Mammary epithelial cell (primary cell): ENCODE measurements at regions of chr9 and their contacts with region 1.

Region 1: GRCh38 chr9:86948074-86948929 is 996 bp upstream of the GAS1 start:
- DNase-seq: peak; percentile 77
- H3K4me3 ChIP-seq: peak overlapping the region; percentile 44 to 93 (median 85)
- H3K27ac ChIP-seq: peak overlapping the region; percentile 45
- H3K4me1 ChIP-seq: peaks cover 9% of the 10 kb centered on the region
- H3K27me3 ChIP-seq: no peaks in the 10 kb centered on the region
- CTCF ChIP-seq: peak; percentile 86 to 95

Region 2: GRCh38 chr9:86434039-86434726 is 514.1 kb before region 1 on chr9:
- CTCF ChIA-PET with region 1: interaction called, 34 read pairs
- dilution Hi-C with region 1: no loop called
- in situ Hi-C with region 1: no loop called
- intact Hi-C with region 1: loop called (anchors 1 kb)
- DNase-seq: peak; percentile 35
- H3K4me3 ChIP-seq: no peak overlapping the region
- H3K27ac ChIP-seq: no peak overlapping the region
- H3K4me1 ChIP-seq: peaks cover 8% of the 10 kb centered on the region
- H3K27me3 ChIP-seq: no peaks in the 10 kb centered on the region
- CTCF ChIP-seq: peak; percentile 82 to 84

Region 3: DNA sequence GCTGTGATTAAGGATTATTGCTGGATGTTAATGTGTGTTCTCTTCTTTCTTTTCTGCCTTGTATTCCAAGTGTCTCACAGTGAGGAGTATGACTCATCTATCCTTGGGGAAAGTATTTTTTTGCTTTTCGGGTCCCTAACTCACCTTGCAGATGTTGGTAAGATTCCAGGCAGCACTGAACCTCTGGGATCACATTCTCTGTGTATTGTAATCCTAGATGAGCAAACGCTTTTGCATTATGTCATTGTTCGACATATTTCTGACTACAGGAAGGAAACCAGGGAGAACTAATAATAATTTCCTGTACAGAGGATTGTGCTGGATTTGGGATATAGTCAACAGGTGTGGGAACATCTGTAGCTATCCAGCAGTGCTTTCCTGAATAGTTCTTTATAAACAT is 348.0 kb before region 1 on chr9:
- CTCF ChIA-PET with region 1: no interaction called
- dilution Hi-C with region 1: no loop called
- in situ Hi-C with region 1: no loop called
- intact Hi-C with region 1: no loop called
- DNase-seq: peak; percentile 68
- H3K4me3 ChIP-seq: no peak overlapping the region
- H3K27ac ChIP-seq: no peak overlapping the region
- H3K4me1 ChIP-seq: peaks cover 12% of the 10 kb centered on the region
- H3K27me3 ChIP-seq: peaks cover 2% of the 10 kb centered on the region
- CTCF ChIP-seq: no peak

Region 4: DNA sequence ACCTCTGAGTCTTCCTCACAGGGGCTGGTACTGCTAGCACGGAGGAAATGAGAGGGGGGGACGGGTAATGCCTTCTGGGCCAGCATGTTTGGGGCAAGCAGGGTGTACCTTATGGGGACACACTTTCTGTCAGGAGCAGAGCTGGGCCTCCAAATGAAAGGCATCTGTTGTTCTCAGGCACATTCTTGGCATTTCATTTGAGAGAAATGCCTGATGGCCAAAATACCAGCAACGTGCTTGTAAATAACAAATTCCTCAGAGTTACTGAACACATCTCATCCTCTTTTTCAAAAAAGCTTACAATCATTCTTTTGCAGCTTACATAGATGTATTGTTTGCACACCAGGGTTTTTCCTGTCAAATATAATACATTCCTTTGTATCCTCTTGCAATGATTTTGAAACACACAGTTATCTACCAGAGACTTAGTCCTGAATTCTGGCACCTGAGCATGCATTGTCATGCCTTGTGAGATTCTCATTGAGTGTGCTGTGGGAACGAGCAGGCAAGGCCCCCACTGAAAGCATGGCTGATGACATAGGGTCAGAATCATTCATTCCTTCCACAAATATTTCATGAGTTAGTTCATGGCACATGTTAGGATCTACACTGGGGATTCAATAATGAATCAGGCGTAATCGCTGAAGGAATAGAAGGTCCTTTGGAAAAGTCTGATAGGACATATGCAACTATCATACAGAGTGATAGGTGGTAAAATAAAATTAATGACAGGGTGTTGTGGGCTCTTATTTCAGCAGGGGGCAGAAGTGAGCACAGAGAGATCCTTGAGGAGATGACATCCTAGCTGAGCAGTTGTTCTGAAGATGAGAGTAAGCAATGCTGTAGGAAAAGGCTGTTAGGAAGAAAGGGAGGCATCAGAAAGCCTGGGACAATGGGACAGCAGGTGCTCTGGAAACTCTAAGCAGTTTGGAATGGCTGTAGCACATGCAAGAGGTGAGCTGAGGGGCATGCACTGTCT is 333.1 kb before region 1 on chr9:
- CTCF ChIA-PET with region 1: no interaction called
- dilution Hi-C with region 1: no loop called
- in situ Hi-C with region 1: no loop called
- intact Hi-C with region 1: loop called (anchors 1 kb)
- DNase-seq: peak; percentile 35
- H3K4me3 ChIP-seq: no peak overlapping the region
- H3K27ac ChIP-seq: no peak overlapping the region
- H3K4me1 ChIP-seq: no peaks in the 10 kb centered on the region
- H3K27me3 ChIP-seq: no peaks in the 10 kb centered on the region
- CTCF ChIP-seq: peak; percentile 56 to 62

Region 5: DNA sequence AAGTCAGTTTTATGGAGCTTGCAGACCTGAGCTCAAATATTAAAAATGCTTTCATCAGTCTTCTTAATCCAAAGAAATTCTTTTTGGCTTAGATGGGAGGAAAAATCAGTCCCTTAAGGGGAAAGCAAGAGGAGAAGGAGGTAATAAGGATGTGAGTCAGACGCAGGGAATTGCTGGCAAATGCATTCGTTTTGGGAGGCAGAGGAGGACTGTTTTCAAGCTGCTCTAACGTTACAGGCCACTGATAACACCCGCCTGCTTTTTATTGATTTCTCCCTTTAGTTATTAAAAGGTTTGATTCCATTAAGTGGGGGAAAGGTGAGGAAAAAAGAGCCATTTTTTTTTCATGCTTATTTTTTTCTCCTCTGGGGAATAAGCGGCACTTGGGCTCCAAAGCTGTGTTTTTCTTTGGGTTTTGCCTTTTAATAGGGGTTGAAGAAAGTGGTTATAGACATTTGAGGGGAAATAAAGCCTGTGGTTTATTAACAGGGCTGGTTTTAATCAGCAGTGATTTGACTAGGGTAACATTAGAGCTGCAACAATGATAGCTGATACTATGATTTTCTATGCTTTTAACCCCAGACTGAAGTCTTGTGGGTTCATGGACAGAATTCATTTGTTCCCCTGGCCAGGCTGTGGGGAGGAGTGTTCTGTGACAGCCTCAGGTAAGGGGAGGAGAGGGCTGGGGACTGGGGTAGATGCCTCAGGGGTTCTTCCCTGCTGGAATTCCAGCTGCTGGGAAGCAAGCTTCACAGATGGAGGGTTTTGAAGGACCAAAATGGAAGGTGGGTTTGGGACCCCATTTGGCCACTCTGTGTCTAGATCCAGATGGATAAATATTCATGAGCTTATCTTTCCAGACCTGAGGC is 226.2 kb before region 1 on chr9:
- CTCF ChIA-PET with region 1: no interaction called
- dilution Hi-C with region 1: no loop called
- in situ Hi-C with region 1: no loop called
- intact Hi-C with region 1: no loop called
- DNase-seq: peak; percentile 72
- H3K4me3 ChIP-seq: peak overlapping the region in 1 of 3 experiments; percentile 5
- H3K27ac ChIP-seq: peak overlapping the region; percentile 55
- H3K4me1 ChIP-seq: peaks cover 31% of the 10 kb centered on the region
- H3K27me3 ChIP-seq: no peaks in the 10 kb centered on the region
- CTCF ChIP-seq: no peak

Region 6: GRCh38 chr9:86854898-86855523 is 93.3 kb before region 1 on chr9:
- CTCF ChIA-PET with region 1: no interaction called
- dilution Hi-C with region 1: no loop called
- in situ Hi-C with region 1: no loop called
- intact Hi-C with region 1: loop called (anchors 5 kb)
- DNase-seq: peak; percentile 68
- H3K4me3 ChIP-seq: no peak overlapping the region
- H3K27ac ChIP-seq: no peak overlapping the region
- H3K4me1 ChIP-seq: peaks cover 15% of the 10 kb centered on the region
- H3K27me3 ChIP-seq: no peaks in the 10 kb centered on the region
- CTCF ChIP-seq: no peak

Region 7: DNA sequence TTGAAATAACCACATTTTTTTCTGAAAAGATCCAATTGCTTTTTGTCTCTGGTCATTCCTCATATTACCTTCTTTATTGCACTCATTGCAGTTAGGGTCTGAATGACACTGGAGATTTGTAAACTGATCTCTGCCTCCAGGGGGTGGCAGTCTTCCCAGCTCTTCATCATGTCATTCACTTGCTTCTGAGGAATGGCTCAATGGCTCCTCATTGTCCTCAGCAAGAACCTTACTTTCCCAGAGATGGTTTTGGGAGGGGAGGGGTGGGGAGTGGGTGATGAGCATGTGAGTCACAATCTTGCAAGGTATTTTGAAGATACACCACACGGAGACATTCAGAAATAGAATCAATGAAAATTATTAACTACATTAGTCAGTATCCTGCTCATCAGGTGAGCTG is 158.8 kb after region 1 on chr9:
- CTCF ChIA-PET with region 1: no interaction called
- dilution Hi-C with region 1: no loop called
- in situ Hi-C with region 1: no loop called
- intact Hi-C with region 1: loop called (anchors 5 kb)
- DNase-seq: peak; percentile 93
- H3K4me3 ChIP-seq: no peak overlapping the region
- H3K27ac ChIP-seq: peak overlapping the region; percentile 84
- H3K4me1 ChIP-seq: peaks cover 37% of the 10 kb centered on the region
- H3K27me3 ChIP-seq: no peaks in the 10 kb centered on the region
- CTCF ChIP-seq: peak in 1 of 2 donors; percentile 39

Region 8: GRCh38 chr9:87290241-87291052 is 342.1 kb after region 1 on chr9:
- CTCF ChIA-PET with region 1: no interaction called
- dilution Hi-C with region 1: no loop called
- in situ Hi-C with region 1: no loop called
- intact Hi-C with region 1: loop called (anchors 1 kb)
- DNase-seq: peak; percentile 24
- H3K4me3 ChIP-seq: no peak overlapping the region
- H3K27ac ChIP-seq: no peak overlapping the region
- H3K4me1 ChIP-seq: peaks cover 6% of the 10 kb centered on the region
- H3K27me3 ChIP-seq: no peaks in the 10 kb centered on the region
- CTCF ChIP-seq: peak; percentile 42 to 70